Naive thymus-derived CD4-positive, alpha-beta T cell (primary cell): ENCODE measurements at regions of chr19 and their contacts with region 1.

Region 1: GRCh38 chr19:2050991-2051772 is at the start of gene MKNK2:
- DNase-seq: peak; percentile 89 to 100 (median 94)
- ATAC-seq: peak; percentile 91
- H3K4me3 ChIP-seq: peak within 1 kb of the TSS; percentile 98
- H3K4me3 Mint-ChIP-seq: peak within 1 kb of the TSS; percentile 83 to 90 (median 86)
- H3K27ac ChIP-seq: peak within 1 kb of the TSS; percentile 90
- H3K27ac Mint-ChIP-seq: peak within 1 kb of the TSS; percentile 87 to 96 (median 94)
- H3K4me1 ChIP-seq: peaks cover 45 to 58% of the 10 kb centered on the region in 2 donors
- H3K4me1 Mint-ChIP-seq: peaks cover 9 to 57% (median 30%) of the 10 kb centered on the region in 7 donors
- H3K27me3 ChIP-seq: no peaks in the 10 kb centered on the region
- H3K27me3 Mint-ChIP-seq: no peaks in the 10 kb centered on the region
- total RNA-seq, gene MKNK2: 190 to 347 (median 238) TPM

Region 2: DNA sequence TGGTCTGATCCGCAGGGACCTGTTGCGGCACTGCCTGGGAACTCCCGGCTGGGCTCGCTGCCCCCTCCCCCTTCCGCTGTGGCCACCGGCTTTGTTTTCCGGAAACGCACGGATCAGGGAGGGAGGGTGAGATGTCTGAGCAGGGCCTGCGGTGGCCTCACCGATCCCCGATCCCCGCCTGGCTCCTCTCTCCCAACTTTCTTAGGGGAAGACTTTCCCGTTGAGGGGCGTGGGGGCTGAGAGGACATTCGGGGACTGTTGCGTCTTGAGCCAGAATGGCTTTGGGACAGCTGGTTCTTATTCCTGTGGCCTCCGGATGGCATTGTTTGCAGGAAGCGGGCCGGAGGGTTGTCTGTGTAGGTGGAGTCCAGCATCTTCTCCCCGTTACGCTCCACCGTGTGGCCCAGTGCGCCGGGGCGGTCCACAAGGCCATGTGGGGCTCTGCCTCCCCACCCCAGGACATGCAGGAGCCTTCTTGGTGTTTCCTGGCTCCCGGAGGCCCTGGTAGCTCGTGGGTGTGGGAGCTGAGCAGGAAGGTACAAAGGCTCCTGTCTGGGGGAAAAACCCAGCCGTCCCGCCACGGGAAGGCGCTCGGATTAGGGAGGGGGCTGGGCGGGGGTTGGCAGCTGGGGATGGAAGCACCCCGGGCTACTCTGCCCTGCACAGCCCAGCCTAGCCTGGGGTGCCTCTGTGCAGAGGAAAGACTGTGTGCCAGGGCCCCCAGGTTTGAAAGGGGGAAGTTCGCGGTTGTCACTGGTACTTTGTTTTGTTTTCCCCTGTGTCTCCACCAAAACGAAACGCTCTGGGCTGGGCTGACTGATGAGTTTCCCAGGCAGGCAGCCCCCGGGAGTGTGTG is 108.9 kb before region 1 on chr19:
- CTCF ChIA-PET with region 1: no interaction called
- POLR2A ChIA-PET with region 1: interaction called, 5 read pairs
- intact Hi-C with region 1: loop called in 1 of 2 experiments (anchors 2 kb)
- DNase-seq: peak; percentile 58 to 84 (median 78)
- ATAC-seq: peak; percentile 51
- H3K4me3 ChIP-seq: peak overlapping the region; percentile 94
- H3K4me3 Mint-ChIP-seq: peak overlapping the region; percentile 91 to 100 (median 96)
- H3K27ac ChIP-seq: peak overlapping the region; percentile 98
- H3K27ac Mint-ChIP-seq: peak overlapping the region; percentile 90 to 99 (median 97)
- H3K4me1 ChIP-seq: peaks cover 21 to 30% of the 10 kb centered on the region in 2 donors
- H3K4me1 Mint-ChIP-seq: peaks cover 22 to 44% (median 30%) of the 10 kb centered on the region in 7 donors
- H3K27me3 ChIP-seq: no peaks in the 10 kb centered on the region
- H3K27me3 Mint-ChIP-seq: peaks cover 0 to 2% (median 0%) of the 10 kb centered on the region in 5 donors

Region 3: DNA sequence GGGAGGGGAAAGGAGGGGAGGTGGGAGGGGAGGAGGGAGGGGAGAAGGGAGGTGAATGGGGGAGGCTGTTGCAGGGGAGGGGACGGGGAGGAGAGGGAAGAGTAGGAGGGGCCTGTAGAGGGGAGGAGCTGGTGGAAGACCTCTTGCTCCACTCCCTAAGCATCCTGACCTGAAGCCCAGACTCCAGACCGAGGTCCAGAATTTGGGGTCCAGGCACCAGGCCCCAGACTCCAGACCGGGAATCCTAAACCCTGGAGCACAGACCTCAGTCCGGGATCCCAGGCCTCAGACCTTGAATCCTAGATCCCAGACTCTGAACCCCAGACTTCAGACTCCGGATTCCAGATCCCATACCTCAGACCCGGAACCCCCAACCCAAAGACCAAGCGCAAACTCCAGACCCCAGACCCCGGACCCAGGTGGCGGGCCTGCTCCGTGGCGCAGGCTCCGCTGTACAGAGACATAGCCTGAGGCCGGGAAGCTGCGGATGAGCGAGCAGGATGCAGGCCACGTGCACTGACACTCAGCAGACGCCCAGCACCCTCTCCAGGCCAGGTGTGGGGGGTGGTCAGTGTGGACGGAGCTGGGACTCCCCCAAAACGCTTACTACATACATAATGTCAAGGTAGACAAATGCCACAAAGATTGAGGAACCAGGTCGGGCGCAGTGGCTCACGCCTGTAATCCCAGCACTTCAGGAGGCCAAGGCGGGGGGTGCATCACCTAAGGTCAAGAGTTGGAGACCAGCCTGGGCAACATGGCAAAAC is 35.0 kb before region 1 on chr19:
- CTCF ChIA-PET with region 1: no interaction called
- POLR2A ChIA-PET with region 1: interaction called, 6 read pairs
- intact Hi-C with region 1: loop called (anchors 1 to 2 kb)
- DNase-seq: peak in 7 of 9 donors; percentile 26 to 78 (median 56)
- ATAC-seq: peak; percentile 65
- H3K4me3 ChIP-seq: no peak overlapping the region
- H3K4me3 Mint-ChIP-seq: peak overlapping the region in 9 of 10 donors; percentile 48 to 79 (median 59)
- H3K27ac ChIP-seq: peak overlapping the region; percentile 37
- H3K27ac Mint-ChIP-seq: peak overlapping the region in 8 of 9 donors; percentile 29 to 81 (median 60)
- H3K4me1 ChIP-seq: no peaks in the 10 kb centered on the region
- H3K4me1 Mint-ChIP-seq: peaks cover 4 to 28% (median 16%) of the 10 kb centered on the region in 7 donors
- H3K27me3 ChIP-seq: no peaks in the 10 kb centered on the region
- H3K27me3 Mint-ChIP-seq: no peaks in the 10 kb centered on the region

Region 4: DNA sequence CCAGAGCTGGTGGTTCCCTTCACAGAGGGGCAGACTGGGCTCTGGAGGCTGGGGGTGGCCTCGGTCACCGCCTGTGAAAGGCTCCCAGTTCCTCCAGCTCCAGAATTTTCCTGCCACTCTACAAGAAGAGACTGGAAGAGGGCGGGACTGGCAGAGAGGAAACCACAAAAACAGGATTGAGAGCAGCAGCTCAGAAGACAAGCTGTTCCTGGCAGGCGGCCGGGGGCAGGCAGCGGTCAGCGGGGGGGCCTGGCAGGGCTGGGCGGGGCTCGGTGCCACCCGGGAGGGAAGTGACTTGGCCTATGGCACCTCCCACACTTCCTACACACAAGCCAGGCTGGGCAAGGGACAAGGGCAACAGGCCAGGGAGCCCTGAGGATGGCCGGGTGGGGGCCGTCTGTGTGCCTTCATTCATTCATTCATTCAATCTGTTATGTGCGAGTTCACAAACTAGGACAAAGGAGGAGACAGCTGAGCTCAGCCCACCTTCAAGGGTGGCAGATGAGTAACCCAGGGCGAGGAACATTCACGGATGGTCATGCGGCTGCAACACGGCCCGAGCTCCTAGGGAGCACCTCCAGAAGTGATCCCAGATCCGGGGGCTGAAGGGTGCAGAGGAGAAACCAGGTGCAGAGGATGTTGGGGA is 18.8 kb before region 1 on chr19:
- CTCF ChIA-PET with region 1: interaction called, 3 read pairs
- POLR2A ChIA-PET with region 1: interaction called, 34 read pairs
- intact Hi-C with region 1: no loop called
- DNase-seq: peak in 1 of 9 donors; percentile 27
- ATAC-seq: peak; percentile 82
- H3K4me3 ChIP-seq: peak overlapping the region; percentile 26
- H3K4me3 Mint-ChIP-seq: peak overlapping the region; percentile 70 to 85 (median 78)
- H3K27ac ChIP-seq: peak overlapping the region; percentile 63
- H3K27ac Mint-ChIP-seq: peak overlapping the region; percentile 86 to 94 (median 91)
- H3K4me1 ChIP-seq: peaks cover 14 to 26% of the 10 kb centered on the region in 2 donors
- H3K4me1 Mint-ChIP-seq: peaks cover 11 to 40% (median 26%) of the 10 kb centered on the region in 7 donors
- H3K27me3 ChIP-seq: no peaks in the 10 kb centered on the region
- H3K27me3 Mint-ChIP-seq: no peaks in the 10 kb centered on the region

Region 5: GRCh38 chr19:2061495-2062381 is 10.6 kb after region 1 on chr19:
- CTCF ChIA-PET with region 1: interaction called, 8 read pairs
- POLR2A ChIA-PET with region 1: interaction called, 41 read pairs
- intact Hi-C with region 1: loop called (anchors 1 kb)
- DNase-seq: peak; percentile 99 to 100 (median 100)
- ATAC-seq: peak; percentile 94
- H3K4me3 ChIP-seq: peak overlapping the region; percentile 72
- H3K4me3 Mint-ChIP-seq: peak overlapping the region; percentile 91 to 97 (median 94)
- H3K27ac ChIP-seq: peak overlapping the region; percentile 99
- H3K27ac Mint-ChIP-seq: peak overlapping the region; percentile 85 to 99 (median 97)
- H3K4me1 ChIP-seq: peaks cover 32 to 49% of the 10 kb centered on the region in 2 donors
- H3K4me1 Mint-ChIP-seq: peaks cover 20 to 60% (median 24%) of the 10 kb centered on the region in 7 donors
- H3K27me3 ChIP-seq: no peaks in the 10 kb centered on the region
- H3K27me3 Mint-ChIP-seq: no peaks in the 10 kb centered on the region

Region 6: DNA sequence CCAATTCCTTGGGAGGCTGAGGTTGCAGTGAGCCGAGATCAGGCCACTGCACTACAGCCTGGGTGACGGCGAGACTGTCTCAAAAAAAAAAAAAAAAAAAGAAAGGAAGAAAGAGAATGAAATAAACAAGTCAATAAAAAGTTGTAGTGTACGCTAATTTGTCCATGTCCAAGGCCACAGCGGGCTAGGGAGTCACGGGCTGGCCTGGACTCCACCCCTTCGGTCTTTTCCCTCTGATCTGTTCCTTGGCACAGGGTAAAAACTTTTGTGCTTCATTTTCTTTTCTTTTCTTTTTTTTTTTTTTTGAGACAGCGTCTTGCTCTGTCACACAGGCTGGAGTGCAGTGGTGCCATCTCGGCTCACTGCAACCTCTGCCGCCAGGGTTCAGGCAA is 19.2 kb after region 1 on chr19:
- CTCF ChIA-PET with region 1: interaction called, 10 read pairs
- POLR2A ChIA-PET with region 1: interaction called, 8 read pairs
- intact Hi-C with region 1: loop called in 1 of 2 experiments (anchors 2 kb)
- DNase-seq: no peak
- ATAC-seq: no peak
- H3K4me3 ChIP-seq: no peak overlapping the region
- H3K4me3 Mint-ChIP-seq: no peak overlapping the region
- H3K27ac ChIP-seq: peak overlapping the region; percentile 53
- H3K27ac Mint-ChIP-seq: peak overlapping the region in 6 of 9 donors; percentile 59 to 88 (median 80)
- H3K4me1 ChIP-seq: peaks cover 0 to 10% of the 10 kb centered on the region in 2 donors
- H3K4me1 Mint-ChIP-seq: peaks cover 13 to 38% (median 22%) of the 10 kb centered on the region in 7 donors
- H3K27me3 ChIP-seq: no peaks in the 10 kb centered on the region
- H3K27me3 Mint-ChIP-seq: no peaks in the 10 kb centered on the region

Region 7: GRCh38 chr19:2084993-2085720 is 34.0 kb after region 1 on chr19:
- CTCF ChIA-PET with region 1: interaction called, 6 read pairs
- POLR2A ChIA-PET with region 1: interaction called, 39 read pairs
- intact Hi-C with region 1: loop called (anchors 1 to 2 kb)
- DNase-seq: peak; percentile 68 to 97 (median 95)
- ATAC-seq: peak; percentile 86
- H3K4me3 ChIP-seq: peak overlapping the region; percentile 98
- H3K4me3 Mint-ChIP-seq: peak overlapping the region; percentile 87 to 99 (median 95)
- H3K27ac ChIP-seq: peak overlapping the region; percentile 99
- H3K27ac Mint-ChIP-seq: peak overlapping the region; percentile 92 to 99 (median 96)
- H3K4me1 ChIP-seq: peaks cover 65 to 72% of the 10 kb centered on the region in 2 donors
- H3K4me1 Mint-ChIP-seq: peaks cover 48 to 76% (median 68%) of the 10 kb centered on the region in 7 donors
- H3K27me3 ChIP-seq: no peaks in the 10 kb centered on the region
- H3K27me3 Mint-ChIP-seq: peaks cover 0 to 2% (median 0%) of the 10 kb centered on the region in 5 donors